ENCODE measurements at regions of chr3 and their contacts with region 1.

Region 1: GRCh38 chr3:46947981-46948791 is 28.4 kb downstream of the CCDC12 start:
- DNase-seq: peak; percentile 85
- H3K4me3 Mint-ChIP-seq: peak overlapping the region; percentile 70
- H3K27ac Mint-ChIP-seq: peak overlapping the region; percentile 98
- H3K4me1 Mint-ChIP-seq: peaks cover 82% of the 10 kb centered on the region
- H3K27me3 Mint-ChIP-seq: no peaks in the 10 kb centered on the region

Region 2: GRCh38 chr3:46845791-46846623 is 102.2 kb before region 1 on chr3:
- CTCF ChIA-PET with region 1: no interaction called
- POLR2A ChIA-PET with region 1: no interaction called
- DNase-seq: peak; percentile 71
- H3K4me3 Mint-ChIP-seq: peak overlapping the region; percentile 60
- H3K27ac Mint-ChIP-seq: no peak overlapping the region
- H3K4me1 Mint-ChIP-seq: peaks cover 11% of the 10 kb centered on the region
- H3K27me3 Mint-ChIP-seq: peaks cover 21% of the 10 kb centered on the region

Region 3: DNA sequence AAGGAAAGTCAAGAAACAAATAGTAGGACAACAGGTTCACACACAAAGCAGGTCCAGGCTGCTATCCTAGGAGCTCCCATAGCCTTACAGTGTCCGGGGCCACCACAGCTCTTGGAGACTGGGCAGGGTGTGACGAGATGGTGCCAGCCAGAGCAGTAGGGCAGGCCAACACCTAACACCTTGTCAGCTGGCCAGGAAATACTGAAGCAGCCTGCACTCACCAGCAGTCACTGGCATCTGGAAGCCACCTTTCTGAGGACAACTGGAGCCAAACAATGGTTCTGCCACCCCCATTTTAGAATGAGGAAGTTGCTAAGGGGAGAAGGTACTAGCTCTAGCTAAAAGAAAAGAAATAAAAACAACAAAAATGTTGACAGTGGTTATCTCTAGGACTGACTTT is 18.9 kb before region 1 on chr3:
- CTCF ChIA-PET with region 1: interaction called, 12 read pairs
- POLR2A ChIA-PET with region 1: interaction called, 94 read pairs
- DNase-seq: no peak
- H3K4me3 Mint-ChIP-seq: no peak overlapping the region
- H3K27ac Mint-ChIP-seq: peak overlapping the region; percentile 67
- H3K4me1 Mint-ChIP-seq: peaks cover 86% of the 10 kb centered on the region
- H3K27me3 Mint-ChIP-seq: no peaks in the 10 kb centered on the region

Region 4: DNA sequence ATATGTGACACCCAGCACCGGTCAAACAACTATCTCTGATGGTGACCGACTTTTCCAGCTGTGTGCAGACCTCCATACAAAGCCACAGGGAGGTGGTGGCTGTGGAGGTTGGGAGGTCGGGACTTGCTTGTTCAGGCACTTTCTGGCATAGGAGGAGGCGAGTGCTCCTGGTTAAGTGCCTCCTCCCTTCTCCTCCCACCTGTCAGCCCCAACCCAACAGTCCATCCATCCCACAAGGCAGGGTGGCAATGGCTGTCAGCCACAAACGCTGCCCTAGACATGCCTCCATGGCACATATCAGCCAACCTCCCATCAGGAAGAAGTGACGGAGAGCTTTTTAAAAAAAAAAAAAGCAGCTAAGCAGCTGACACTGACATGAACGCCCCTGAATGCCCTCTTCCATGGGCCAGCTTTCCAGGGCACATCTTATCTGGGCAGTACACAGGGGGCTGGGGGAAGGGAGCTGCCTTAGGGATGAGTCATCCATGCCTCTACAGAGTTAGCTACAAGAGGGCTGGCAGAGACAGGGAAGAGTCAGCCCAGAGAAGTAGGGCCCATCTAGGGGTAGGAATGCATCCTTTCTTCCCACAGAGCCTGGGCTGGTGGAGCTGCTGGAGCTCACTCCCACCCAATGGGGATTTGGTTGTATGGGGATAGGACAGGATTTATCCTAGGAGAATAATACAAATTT is 12.9 kb before region 1 on chr3:
- CTCF ChIA-PET with region 1: interaction called, 12 read pairs
- POLR2A ChIA-PET with region 1: interaction called, 94 read pairs
- DNase-seq: no peak
- H3K4me3 Mint-ChIP-seq: no peak overlapping the region
- H3K27ac Mint-ChIP-seq: no peak overlapping the region
- H3K4me1 Mint-ChIP-seq: peaks cover 63% of the 10 kb centered on the region
- H3K27me3 Mint-ChIP-seq: no peaks in the 10 kb centered on the region

Region 5: DNA sequence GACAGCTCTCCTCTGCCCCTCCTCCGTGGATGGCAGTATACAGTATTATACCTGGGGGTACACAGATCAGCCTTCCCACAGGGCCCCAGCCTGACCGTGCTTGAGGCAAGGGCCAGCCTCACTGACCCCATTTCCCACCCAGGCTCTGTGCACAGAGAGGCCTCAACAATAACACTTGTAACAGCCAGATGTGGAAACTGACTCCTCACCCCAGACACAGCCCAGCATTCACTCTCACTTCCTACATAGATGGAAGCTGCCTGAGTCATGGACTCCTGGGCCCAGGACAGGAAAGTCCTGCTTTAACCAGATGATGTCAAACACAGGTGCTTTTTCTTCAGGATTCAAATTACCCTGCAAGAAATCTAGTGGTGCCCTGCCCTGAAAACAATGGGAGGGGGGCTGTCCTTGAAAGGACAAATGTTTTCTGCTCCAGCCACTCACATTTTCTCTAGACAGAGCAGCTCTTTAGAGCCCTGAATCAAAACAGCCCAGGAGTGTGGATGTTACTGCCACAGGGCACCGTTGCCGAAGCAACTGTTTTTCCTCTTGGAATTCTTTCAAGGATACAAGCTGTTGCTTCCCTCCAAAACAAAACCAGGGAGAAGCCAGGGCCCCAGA is 12.0 kb after region 1 on chr3:
- CTCF ChIA-PET with region 1: interaction called, 3 read pairs
- POLR2A ChIA-PET with region 1: interaction called, 36 read pairs
- DNase-seq: no peak
- H3K4me3 Mint-ChIP-seq: no peak overlapping the region
- H3K27ac Mint-ChIP-seq: peak overlapping the region; percentile 77
- H3K4me1 Mint-ChIP-seq: peaks cover 73% of the 10 kb centered on the region
- H3K27me3 Mint-ChIP-seq: no peaks in the 10 kb centered on the region

Region 6: DNA sequence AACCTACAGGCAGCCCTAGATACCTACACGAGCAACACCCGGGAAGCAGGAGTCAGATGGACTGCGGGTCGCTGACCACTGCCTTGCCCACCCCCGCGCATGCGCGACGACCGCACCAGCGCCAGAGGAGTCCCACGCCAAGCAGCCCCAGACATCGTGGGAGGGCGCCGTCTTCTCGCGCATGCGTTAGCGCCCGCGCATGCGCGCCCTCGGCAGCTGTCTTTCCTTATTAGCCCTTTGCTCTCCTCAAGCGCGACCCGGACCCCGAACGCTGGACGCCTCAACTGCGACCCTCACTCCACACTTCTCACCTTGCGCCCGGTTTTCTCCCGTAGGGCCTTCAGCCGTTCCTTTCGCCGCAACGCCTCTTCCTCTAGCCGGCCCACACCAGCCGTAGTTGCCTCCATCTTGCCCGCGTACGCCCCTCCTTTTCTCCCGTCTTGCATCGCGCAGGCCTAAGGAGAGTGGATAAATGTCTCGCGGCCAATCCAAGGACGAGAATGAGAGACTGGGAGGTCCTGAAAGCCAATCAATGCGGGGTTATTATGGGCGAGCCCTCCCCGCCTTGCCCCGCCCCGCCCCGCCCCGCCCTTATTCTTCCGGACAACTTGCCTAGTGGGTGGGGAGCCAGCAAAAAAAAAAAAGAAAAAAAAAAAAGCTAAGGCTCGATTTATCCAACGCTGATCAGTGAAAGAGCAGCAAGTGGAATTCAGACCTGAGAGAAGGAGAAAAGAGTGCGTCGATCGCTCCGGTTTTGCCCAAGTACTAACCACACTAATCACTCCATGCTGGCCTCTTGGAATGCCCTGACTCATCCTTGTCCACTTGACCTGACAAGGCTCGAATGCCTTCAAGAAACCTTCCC is 28.4 kb after region 1 on chr3 and contains the start of gene CCDC12:
- CTCF ChIA-PET with region 1: interaction called, 6 read pairs
- POLR2A ChIA-PET with region 1: interaction called, 64 read pairs
- DNase-seq: peak; percentile 96
- H3K4me3 Mint-ChIP-seq: peak within 1 kb of the TSS; percentile 99
- H3K27ac Mint-ChIP-seq: peak within 1 kb of the TSS; percentile 93
- H3K4me1 Mint-ChIP-seq: peaks cover 64% of the 10 kb centered on the region
- H3K27me3 Mint-ChIP-seq: no peaks in the 10 kb centered on the region
- total RNA-seq, gene CCDC12: 55.0 to 56.7 TPM

Region 7: DNA sequence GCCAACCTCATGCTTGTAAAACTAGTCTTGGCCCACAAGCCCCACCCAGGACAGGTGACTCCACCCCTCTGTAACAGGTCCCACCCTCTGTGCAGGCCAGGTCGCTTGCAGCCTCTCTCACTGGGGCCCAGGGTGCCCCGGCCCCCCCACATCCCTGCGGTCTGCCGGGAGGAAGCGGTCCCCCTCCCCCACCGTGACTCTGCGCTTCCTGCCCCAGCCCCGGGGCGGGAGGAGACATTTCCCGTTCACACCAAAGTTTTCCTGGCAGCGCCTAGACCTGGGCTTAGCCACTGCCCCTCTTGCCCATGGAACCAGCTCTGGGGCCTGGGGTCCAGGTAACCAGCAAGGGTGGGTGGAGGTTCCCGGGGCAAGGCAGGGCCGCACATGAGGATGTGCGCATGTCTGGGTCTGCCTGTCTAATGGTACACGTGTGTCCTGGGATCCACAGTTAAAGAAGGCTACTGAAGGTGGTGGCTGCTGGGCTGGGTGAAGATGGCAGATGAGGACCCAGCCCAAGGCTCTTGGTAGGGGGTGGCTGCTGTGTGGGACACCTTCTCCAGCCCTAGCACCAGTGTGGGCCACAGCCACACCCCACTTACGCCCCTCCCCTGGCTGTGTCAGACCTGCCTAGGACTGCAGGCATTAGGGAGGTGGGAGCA is 39.7 kb after region 1 on chr3:
- CTCF ChIA-PET with region 1: no interaction called
- POLR2A ChIA-PET with region 1: interaction called, 34 read pairs
- DNase-seq: peak; percentile 94
- H3K4me3 Mint-ChIP-seq: peak overlapping the region; percentile 81
- H3K27ac Mint-ChIP-seq: peak overlapping the region; percentile 89
- H3K4me1 Mint-ChIP-seq: peaks cover 82% of the 10 kb centered on the region
- H3K27me3 Mint-ChIP-seq: no peaks in the 10 kb centered on the region

Region 8: DNA sequence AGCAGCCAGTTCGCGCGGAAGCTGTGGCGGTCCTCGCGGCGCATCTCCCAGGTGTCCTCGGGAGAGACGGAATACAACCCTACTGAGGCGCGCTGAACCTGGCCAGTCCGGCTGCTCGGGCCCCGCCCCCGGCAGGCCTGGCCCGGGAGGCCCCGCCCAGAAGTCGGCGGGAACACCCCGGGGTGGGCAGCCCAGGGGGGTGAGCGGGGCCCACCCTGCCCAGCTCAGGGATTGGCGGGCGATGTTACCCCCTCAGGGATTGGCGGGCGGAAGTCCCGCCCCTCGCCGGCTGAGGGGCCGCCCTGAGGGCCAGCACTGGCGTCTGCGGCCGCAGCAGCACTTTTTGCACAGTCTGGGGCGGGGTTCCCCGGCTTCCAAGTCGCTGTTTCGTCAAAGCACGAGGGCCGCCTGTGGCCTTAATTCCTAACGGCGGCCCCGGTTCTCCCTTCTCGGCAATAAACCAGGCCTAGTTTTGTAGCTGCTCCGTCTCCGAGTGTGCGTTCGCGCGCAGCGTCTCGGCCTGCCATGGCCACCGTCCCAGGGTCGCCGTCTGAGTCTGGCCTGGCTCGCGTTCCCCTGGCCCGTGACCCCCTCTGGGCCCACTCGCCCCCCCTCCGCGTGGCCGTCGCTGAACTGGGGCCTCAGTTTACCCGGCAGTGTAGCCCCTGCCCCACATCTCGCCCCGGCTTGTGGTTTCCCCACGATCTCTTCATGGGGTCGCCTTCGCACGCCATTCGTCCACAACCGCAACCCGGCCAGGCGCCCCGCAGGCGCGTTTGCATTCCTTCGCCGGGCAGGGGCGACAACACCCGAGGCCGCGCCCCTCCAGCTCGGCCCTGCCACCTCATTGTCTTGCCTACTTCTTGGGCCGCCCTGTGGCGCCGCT is 61.3 kb after region 1 on chr3:
- CTCF ChIA-PET with region 1: no interaction called
- POLR2A ChIA-PET with region 1: no interaction called
- DNase-seq: peak; percentile 42
- H3K4me3 Mint-ChIP-seq: no peak overlapping the region
- H3K27ac Mint-ChIP-seq: no peak overlapping the region
- H3K4me1 Mint-ChIP-seq: peaks cover 11% of the 10 kb centered on the region
- H3K27me3 Mint-ChIP-seq: no peaks in the 10 kb centered on the region

Region 9: GRCh38 chr3:47098910-47099309 is 150.7 kb after region 1 on chr3:
- CTCF ChIA-PET with region 1: no interaction called
- POLR2A ChIA-PET with region 1: no interaction called
- DNase-seq: no peak
- H3K4me3 Mint-ChIP-seq: no peak overlapping the region
- H3K27ac Mint-ChIP-seq: no peak overlapping the region
- H3K4me1 Mint-ChIP-seq: no peaks in the 10 kb centered on the region
- H3K27me3 Mint-ChIP-seq: no peaks in the 10 kb centered on the region